Activated CD4-positive, alpha-beta T cell treated with anti-CD3 and anti-CD28 coated beads for 36 hours (primary cell): ENCODE measurements at regions of chr12 and their contacts with region 1.

Region 1: DNA sequence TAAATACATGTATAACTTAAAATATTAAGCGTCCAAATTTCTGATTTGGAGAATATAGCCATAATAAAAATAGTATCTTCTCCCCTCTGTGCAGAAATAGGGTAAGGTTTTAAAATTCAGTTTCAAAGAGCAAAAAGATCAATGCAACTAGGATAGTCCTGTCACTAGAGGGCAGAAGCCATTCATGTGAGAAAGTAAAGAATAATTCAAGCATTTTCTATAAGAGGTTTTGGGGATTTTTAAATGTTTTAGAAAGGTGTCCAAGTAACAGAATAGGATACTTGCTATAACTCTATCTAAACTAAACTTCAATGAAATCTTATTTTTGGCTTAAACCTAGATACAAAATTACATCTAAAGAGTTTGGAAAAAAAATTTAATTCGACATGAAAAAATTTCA is 50.3 kb downstream of the ADAMTS20 start:
- DNase-seq: no peak
- ATAC-seq: no peak
- H3K4me3 Mint-ChIP-seq: no peak overlapping the region
- H3K27ac Mint-ChIP-seq: no peak overlapping the region
- H3K4me1 Mint-ChIP-seq: no peaks in the 10 kb centered on the region
- H3K27me3 Mint-ChIP-seq: no peaks in the 10 kb centered on the region

Region 2: GRCh38 chr12:43602738-43603137 is 101.0 kb after region 1 on chr12:
- CTCF ChIA-PET with region 1: no interaction called
- POLR2A ChIA-PET with region 1: no interaction called
- intact Hi-C with region 1: no loop called
- DNase-seq: no peak
- ATAC-seq: no peak
- H3K4me3 Mint-ChIP-seq: no peak overlapping the region
- H3K27ac Mint-ChIP-seq: no peak overlapping the region
- H3K4me1 Mint-ChIP-seq: no peaks in the 10 kb centered on the region
- H3K27me3 Mint-ChIP-seq: no peaks in the 10 kb centered on the region

Region 3: DNA sequence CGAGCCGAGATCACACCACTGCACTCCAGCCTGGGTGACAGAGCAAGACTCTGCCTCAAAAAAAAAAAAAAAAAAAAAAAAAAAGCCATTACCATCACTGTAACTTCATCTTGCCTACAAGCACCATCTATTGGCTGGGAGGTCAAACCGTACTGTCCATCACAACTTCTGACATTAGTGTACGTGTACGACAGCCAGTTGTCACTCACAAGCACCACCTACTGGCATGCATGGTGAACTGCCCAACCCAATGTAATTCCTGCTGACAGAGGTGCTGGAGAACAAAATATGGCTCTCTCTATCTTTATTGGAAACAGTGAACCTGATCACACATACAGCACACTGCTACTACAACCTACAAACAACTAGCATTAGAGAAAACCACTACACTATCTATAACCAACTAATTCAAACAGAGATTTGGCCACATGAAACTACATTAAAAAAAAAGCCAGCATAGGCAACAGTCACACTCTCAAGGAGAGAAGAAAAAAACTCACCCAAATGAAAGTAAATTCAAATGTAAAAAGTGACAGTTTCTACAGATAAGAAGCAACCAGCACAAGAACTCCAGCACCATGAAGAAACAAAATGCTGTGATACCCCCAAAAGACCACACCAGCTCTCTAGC is 174.6 kb after region 1 on chr12:
- CTCF ChIA-PET with region 1: no interaction called
- POLR2A ChIA-PET with region 1: no interaction called
- intact Hi-C with region 1: loop called in 1 of 2 experiments (anchors 1 kb)
- DNase-seq: peak; percentile 42
- ATAC-seq: peak; percentile 66
- H3K4me3 Mint-ChIP-seq: no peak overlapping the region
- H3K27ac Mint-ChIP-seq: no peak overlapping the region
- H3K4me1 Mint-ChIP-seq: no peaks in the 10 kb centered on the region
- H3K27me3 Mint-ChIP-seq: peaks cover 13% of the 10 kb centered on the region

Region 4: GRCh38 chr12:43728117-43728516 is 226.4 kb after region 1 on chr12:
- CTCF ChIA-PET with region 1: no interaction called
- POLR2A ChIA-PET with region 1: no interaction called
- intact Hi-C with region 1: loop called in 1 of 2 experiments (anchors 2 kb)
- DNase-seq: no peak
- ATAC-seq: no peak
- H3K4me3 Mint-ChIP-seq: no peak overlapping the region
- H3K27ac Mint-ChIP-seq: no peak overlapping the region
- H3K4me1 Mint-ChIP-seq: peaks cover 14% of the 10 kb centered on the region
- H3K27me3 Mint-ChIP-seq: no peaks in the 10 kb centered on the region

Region 5: GRCh38 chr12:43882578-43883178 is 381.0 kb after region 1 on chr12:
- CTCF ChIA-PET with region 1: interaction called, 3 read pairs
- POLR2A ChIA-PET with region 1: no interaction called
- intact Hi-C with region 1: loop called in 1 of 2 experiments (anchors 2 kb)
- DNase-seq: peak; percentile 27
- ATAC-seq: peak; percentile 65
- H3K4me3 Mint-ChIP-seq: no peak overlapping the region
- H3K27ac Mint-ChIP-seq: no peak overlapping the region
- H3K4me1 Mint-ChIP-seq: no peaks in the 10 kb centered on the region
- H3K27me3 Mint-ChIP-seq: no peaks in the 10 kb centered on the region